CD4-positive, alpha-beta memory T cell (primary cell): ENCODE measurements at regions of chr17 and their contacts with region 1.

Region 1: GRCh38 chr17:3695723-3696411 is at the start of gene P2RX5:
- DNase-seq: peak; percentile 32 to 44 (median 37)
- H3K4me3 ChIP-seq: peak within 1 kb of the TSS; percentile 42 to 74
- H3K4me3 Mint-ChIP-seq: peak within 1 kb of the TSS; percentile 94 to 98 (median 96)
- H3K27ac ChIP-seq: peak within 1 kb of the TSS; percentile 48
- H3K27ac Mint-ChIP-seq: peak within 1 kb of the TSS; percentile 35 to 95 (median 87)
- H3K4me1 ChIP-seq: peaks cover 20% of the 10 kb centered on the region
- H3K4me1 Mint-ChIP-seq: peaks cover 8 to 36% (median 20%) of the 10 kb centered on the region in 4 donors
- H3K27me3 ChIP-seq: no peaks in the 10 kb centered on the region
- H3K27me3 Mint-ChIP-seq: no peaks in the 10 kb centered on the region
- total RNA-seq, gene P2RX5: 13.8 to 16.0 TPM

Region 2: DNA sequence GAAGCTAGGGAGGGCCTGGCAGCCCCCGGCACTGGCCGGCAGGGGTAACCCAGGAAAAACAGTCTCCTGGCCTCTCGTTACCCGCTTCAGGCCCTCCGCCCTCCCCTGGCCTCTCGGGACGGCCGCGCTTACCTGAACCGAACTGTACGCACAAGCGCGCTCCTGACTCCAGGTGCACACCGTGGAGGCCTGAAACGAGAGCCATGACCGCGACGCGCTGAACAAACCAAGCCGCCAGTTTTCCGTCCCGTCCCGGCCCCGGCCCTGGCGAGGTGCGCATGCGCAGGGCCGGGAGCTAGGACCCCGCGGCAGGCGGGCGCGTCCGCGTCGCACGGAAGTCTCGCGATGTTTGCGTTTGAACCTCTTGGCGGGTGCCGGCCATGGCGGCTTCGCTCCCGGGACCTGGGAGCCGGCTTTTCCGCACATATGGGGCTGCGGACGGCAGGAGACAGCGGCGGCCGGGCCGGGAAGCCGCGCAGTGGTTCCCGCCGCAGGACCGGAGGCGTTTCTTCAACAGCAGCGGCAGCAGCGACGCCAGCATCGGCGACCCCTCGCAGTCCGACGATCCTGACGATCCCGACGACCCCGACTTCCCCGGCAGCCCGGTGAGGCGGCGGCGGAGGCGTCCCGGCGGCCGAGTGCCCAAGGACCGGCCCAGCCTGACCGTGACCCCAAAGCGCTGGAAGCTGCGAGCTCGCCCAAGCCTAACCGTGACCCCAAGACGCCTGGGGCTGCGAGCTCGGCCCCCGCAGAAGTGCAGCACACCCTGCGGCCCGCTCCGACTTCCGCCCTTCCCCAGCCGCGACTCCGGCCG is 27.9 kb after region 1 on chr17 and contains the start of gene HASPIN:
- CTCF ChIA-PET with region 1: interaction called, 4 read pairs
- POLR2A ChIA-PET with region 1: interaction called, 19 read pairs
- intact Hi-C with region 1: loop called (anchors 1 kb)
- DNase-seq: peak; percentile 88 to 92 (median 91)
- H3K4me3 ChIP-seq: peak within 1 kb of the TSS; percentile 59 to 95
- H3K4me3 Mint-ChIP-seq: peak within 1 kb of the TSS; percentile 86 to 95 (median 94)
- H3K27ac ChIP-seq: peak within 1 kb of the TSS; percentile 74
- H3K27ac Mint-ChIP-seq: peak within 1 kb of the TSS; percentile 75 to 95 (median 93)
- H3K4me1 ChIP-seq: peaks cover 36% of the 10 kb centered on the region
- H3K4me1 Mint-ChIP-seq: peaks cover 15 to 44% (median 28%) of the 10 kb centered on the region in 4 donors
- H3K27me3 ChIP-seq: no peaks in the 10 kb centered on the region
- H3K27me3 Mint-ChIP-seq: no peaks in the 10 kb centered on the region
- total RNA-seq, gene HASPIN: 0.28 to 0.41 TPM